ENCODE measurements at regions of chr17 and their contacts with region 1.

Region 1: DNA sequence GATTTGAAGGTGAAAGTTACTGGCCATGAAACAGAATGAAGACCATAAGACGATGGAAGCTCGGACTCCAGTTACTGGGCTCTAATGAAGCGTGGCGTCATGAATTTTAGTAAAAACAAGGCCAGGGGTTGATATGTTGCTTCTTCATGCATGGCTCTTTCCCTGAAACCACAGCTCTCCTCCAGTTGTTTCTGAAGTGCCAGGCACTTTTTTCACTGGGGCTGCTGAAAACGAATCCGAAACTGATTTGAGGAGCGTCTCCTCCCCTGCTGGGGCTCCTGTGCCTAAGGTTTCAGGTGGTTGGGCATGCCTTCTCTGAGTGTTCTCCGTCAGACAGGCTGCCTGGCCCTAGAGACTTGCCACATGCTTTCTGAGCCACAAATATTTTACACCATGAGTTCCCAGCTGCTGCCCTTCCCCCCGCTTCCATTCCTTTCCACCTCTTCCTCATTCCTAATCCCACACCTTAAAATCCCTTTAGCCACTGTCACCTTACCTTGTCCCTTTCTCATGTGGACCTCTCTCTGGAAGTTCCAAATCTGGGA is 3.7 kb upstream of the MYL4 start:
- DNase-seq: peak; percentile 78
- H3K4me3 Mint-ChIP-seq: peak overlapping the region; percentile 51
- H3K27ac Mint-ChIP-seq: peak overlapping the region; percentile 78
- H3K4me1 Mint-ChIP-seq: peaks cover 43% of the 10 kb centered on the region
- H3K27me3 Mint-ChIP-seq: no peaks in the 10 kb centered on the region

Region 2: DNA sequence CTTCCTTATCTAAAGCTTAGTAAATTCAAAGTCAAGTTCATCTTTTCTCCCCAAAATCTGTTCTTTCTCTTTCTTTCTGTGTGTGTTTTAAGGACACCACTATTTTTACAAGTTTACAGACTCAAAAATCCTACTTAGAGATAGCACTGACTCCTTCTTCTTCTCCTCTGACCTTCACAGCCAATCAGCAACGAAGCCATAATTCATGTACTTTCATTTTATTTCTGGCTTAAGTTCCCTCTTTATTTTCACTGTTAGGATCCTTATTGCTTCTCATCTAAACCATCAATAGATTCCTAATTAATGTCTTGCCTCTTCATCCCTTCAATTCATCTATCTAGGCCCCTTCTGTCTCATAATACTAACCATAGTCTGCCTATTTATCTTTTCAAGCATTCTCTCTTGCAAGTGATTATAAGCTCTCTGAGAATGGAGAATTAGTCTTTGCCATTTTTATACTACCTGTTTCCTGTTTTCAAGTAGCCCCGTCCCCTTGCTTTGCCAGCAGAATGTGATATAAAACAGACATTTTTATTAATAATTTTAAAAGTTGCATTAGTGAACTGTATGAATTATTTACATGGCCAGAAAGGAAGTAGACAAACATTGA is 43.4 kb before region 1 on chr17:
- CTCF ChIA-PET with region 1: interaction called, 4 read pairs
- intact Hi-C with region 1: loop called (anchors 2 kb)
- DNase-seq: no peak
- H3K4me3 Mint-ChIP-seq: no peak overlapping the region
- H3K27ac Mint-ChIP-seq: peak overlapping the region; percentile 2
- H3K4me1 Mint-ChIP-seq: peaks cover 17% of the 10 kb centered on the region
- H3K27me3 Mint-ChIP-seq: no peaks in the 10 kb centered on the region

Region 3: DNA sequence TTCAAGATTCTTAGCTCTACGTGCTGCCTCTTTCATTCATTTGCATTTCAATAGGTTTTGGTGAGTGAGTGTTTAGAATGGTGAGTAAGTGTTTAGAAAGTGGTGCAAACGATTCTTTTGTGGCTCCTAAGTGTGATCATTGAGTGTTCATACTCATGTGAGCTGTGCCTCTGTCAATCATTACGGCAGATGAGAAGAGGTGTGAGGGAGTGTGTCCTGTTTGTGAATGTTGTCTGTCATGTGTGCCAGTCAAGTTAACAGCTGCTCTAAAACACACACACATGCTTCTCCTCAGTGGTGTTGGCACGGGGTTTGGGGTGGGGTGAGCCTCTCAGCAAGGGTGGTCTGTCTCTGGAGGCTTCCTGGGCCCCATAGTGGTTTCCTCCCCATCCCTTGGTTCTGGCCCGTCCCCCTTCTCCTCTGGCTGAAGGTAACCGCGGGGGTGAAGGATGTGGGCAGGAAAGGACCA is 15.1 kb after region 1 on chr17:
- CTCF ChIA-PET with region 1: interaction called, 3 read pairs
- intact Hi-C with region 1: loop called (anchors 1 kb)
- DNase-seq: peak; percentile 26
- H3K4me3 Mint-ChIP-seq: no peak overlapping the region
- H3K27ac Mint-ChIP-seq: no peak overlapping the region
- H3K4me1 Mint-ChIP-seq: peaks cover 30% of the 10 kb centered on the region
- H3K27me3 Mint-ChIP-seq: no peaks in the 10 kb centered on the region